Activated B cell treated with CpG ODN at 0.5 μM for 24 hours (primary cell): ENCODE measurements at regions of chr7 and their contacts with region 1.

Region 1: DNA sequence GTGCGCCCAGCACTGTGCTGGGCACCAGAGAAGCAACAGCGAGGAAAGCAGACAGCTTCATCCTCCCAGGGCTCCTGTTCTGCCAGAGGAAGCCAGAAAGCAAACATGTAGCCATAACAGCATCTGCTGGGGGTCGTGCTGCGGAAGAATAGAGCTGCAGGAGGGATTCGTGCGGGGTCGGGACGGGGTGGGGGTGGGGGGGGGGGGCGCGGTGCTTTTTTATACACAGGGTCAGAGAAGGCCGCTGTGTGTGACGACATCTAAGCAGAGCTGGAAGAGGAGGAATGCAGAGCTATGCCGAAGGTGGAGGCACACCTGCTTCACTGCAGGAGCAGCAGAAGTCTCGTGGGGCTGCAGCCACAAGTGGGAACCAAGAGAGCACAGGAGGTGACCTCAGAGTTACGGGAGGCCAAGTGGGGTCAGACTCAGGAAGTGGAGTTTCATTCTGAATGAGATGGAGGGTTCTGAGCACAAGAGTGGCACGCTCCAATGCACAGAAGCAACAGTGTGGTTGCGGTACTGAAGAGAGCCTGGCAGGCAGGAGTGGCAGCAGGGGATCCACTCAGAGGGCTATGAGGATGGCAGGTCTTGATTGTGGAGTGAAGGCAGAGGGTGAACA is 11.1 kb downstream of the PKD1L1 start:
- DNase-seq: peak; percentile 62
- ATAC-seq: peak; percentile 91
- H3K4me3 Mint-ChIP-seq: peak overlapping the region; percentile 63
- H3K27ac Mint-ChIP-seq: peak overlapping the region; percentile 46
- H3K4me1 Mint-ChIP-seq: peaks cover 35% of the 10 kb centered on the region
- H3K27me3 Mint-ChIP-seq: no peaks in the 10 kb centered on the region
- CTCF ChIP-seq: no peak

Region 2: DNA sequence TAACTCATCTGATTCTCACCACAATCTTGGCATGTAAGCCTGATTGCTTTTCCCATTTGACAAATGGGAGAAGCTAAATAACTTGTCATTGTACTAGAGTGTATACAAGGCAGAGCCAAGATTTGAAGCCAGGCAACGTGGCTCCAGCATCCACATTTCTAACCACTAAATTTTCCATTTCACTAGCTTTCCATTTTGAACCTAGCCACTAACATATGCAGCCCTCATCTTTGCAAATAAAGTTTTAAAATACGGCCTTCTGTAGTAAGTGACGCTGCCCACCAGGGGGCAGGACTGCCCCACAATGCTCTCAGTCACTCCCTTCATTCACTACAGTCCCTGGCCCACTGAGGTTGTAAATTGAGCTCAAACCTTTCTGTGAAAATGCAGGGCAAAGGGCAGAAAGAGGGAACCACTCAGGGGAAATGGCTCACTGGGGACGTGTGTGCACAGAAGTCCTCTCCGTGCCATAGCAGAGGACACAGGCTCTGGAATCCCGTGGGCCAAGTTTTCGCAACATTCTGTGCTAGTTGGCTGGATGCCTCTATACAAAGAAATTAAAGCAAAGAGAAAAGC is 671.0 kb before region 1 on chr7:
- CTCF ChIA-PET with region 1: interaction called, 19 read pairs
- POLR2A ChIA-PET with region 1: no interaction called
- intact Hi-C with region 1: loop called (anchors 1 kb)
- DNase-seq: peak; percentile 50
- ATAC-seq: peak; percentile 92
- H3K4me3 Mint-ChIP-seq: no peak overlapping the region
- H3K27ac Mint-ChIP-seq: no peak overlapping the region
- H3K4me1 Mint-ChIP-seq: no peaks in the 10 kb centered on the region
- H3K27me3 Mint-ChIP-seq: no peaks in the 10 kb centered on the region
- CTCF ChIP-seq: peak; percentile 60

Region 3: GRCh38 chr7:47482013-47482875 is 454.9 kb before region 1 on chr7:
- CTCF ChIA-PET with region 1: no interaction called
- POLR2A ChIA-PET with region 1: no interaction called
- intact Hi-C with region 1: loop called (anchors 2 kb)
- DNase-seq: no peak
- ATAC-seq: peak; percentile 74
- H3K4me3 Mint-ChIP-seq: peak overlapping the region; percentile 75
- H3K27ac Mint-ChIP-seq: peak overlapping the region; percentile 91
- H3K4me1 Mint-ChIP-seq: peaks cover 59% of the 10 kb centered on the region
- H3K27me3 Mint-ChIP-seq: no peaks in the 10 kb centered on the region
- CTCF ChIP-seq: no peak

Region 4: GRCh38 chr7:47581806-47582763 is 355.1 kb before region 1 on chr7 and contains the start of gene TNS3:
- CTCF ChIA-PET with region 1: no interaction called
- POLR2A ChIA-PET with region 1: no interaction called
- intact Hi-C with region 1: loop called (anchors 5 kb)
- DNase-seq: peak; percentile 64
- ATAC-seq: peak; percentile 80
- H3K4me3 Mint-ChIP-seq: peak within 1 kb of the TSS; percentile 87
- H3K27ac Mint-ChIP-seq: peak within 1 kb of the TSS; percentile 83
- H3K4me1 Mint-ChIP-seq: peaks cover 57% of the 10 kb centered on the region
- H3K27me3 Mint-ChIP-seq: no peaks in the 10 kb centered on the region
- CTCF ChIP-seq: no peak
- total RNA-seq, gene TNS3: 29.4 and 30.3 TPM in 2 replicates

Region 5: GRCh38 chr7:47852330-47853245 is 84.6 kb before region 1 on chr7:
- CTCF ChIA-PET with region 1: interaction called, 12 read pairs
- POLR2A ChIA-PET with region 1: no interaction called
- intact Hi-C with region 1: loop called (anchors 1 kb)
- DNase-seq: no peak
- ATAC-seq: peak; percentile 40
- H3K4me3 Mint-ChIP-seq: no peak overlapping the region
- H3K27ac Mint-ChIP-seq: no peak overlapping the region
- H3K4me1 Mint-ChIP-seq: no peaks in the 10 kb centered on the region
- H3K27me3 Mint-ChIP-seq: no peaks in the 10 kb centered on the region
- CTCF ChIP-seq: no peak

Region 6: GRCh38 chr7:47954231-47954911 is 17.2 kb after region 1 on chr7:
- CTCF ChIA-PET with region 1: no interaction called
- POLR2A ChIA-PET with region 1: no interaction called
- intact Hi-C with region 1: no loop called
- DNase-seq: no peak
- ATAC-seq: no peak
- H3K4me3 Mint-ChIP-seq: no peak overlapping the region
- H3K27ac Mint-ChIP-seq: no peak overlapping the region
- H3K4me1 Mint-ChIP-seq: no peaks in the 10 kb centered on the region
- H3K27me3 Mint-ChIP-seq: no peaks in the 10 kb centered on the region
- CTCF ChIP-seq: no peak

Region 7: GRCh38 chr7:47979145-47979831 is 42.1 kb after region 1 on chr7 and contains the start of gene HUS1:
- CTCF ChIA-PET with region 1: no interaction called
- POLR2A ChIA-PET with region 1: no interaction called
- intact Hi-C with region 1: loop called (anchors 1 kb)
- DNase-seq: peak; percentile 84
- ATAC-seq: peak; percentile 97
- H3K4me3 Mint-ChIP-seq: peak within 1 kb of the TSS; percentile 99
- H3K27ac Mint-ChIP-seq: peak within 1 kb of the TSS; percentile 99
- H3K4me1 Mint-ChIP-seq: peaks cover 28% of the 10 kb centered on the region
- H3K27me3 Mint-ChIP-seq: no peaks in the 10 kb centered on the region
- CTCF ChIP-seq: no peak
- total RNA-seq, gene HUS1: 37.3 and 42.5 TPM in 2 replicates

Region 8: DNA sequence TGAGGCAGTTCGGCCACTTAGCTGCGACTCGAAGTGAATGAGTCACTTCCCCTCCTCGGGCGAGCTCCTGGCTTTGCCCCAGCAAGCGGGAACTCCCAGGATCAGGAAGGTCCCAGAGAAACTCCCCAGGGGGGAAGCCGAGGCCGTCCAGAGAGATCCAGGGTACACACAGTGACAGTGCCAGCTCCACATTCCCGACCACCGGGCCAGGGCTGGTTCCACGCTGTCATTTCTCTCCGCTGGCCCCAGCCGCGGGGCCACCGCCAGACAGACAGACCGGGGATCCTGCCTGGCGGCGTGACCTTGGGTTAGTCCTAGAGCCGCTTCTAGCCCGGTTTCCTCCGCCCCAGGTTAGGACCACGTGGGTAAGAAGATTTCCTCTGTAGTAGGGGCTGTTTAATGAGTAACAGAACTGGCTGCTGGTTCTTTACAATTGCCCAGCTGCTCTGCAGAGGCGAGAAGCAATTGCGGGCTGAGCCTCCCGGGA is 151.4 kb after region 1 on chr7:
- CTCF ChIA-PET with region 1: no interaction called
- POLR2A ChIA-PET with region 1: interaction called, 9 read pairs
- intact Hi-C with region 1: loop called (anchors 1 kb)
- DNase-seq: no peak
- ATAC-seq: peak; percentile 73
- H3K4me3 Mint-ChIP-seq: peak overlapping the region; percentile 88
- H3K27ac Mint-ChIP-seq: peak overlapping the region; percentile 82
- H3K4me1 Mint-ChIP-seq: peaks cover 51% of the 10 kb centered on the region
- H3K27me3 Mint-ChIP-seq: no peaks in the 10 kb centered on the region
- CTCF ChIP-seq: no peak